ENCODE measurements at regions of chr1 and their contacts with region 1.

Region 1: GRCh38 chr1:87045761-87046304 is 131.4 kb downstream of the HS2ST1 start:
- DNase-seq: peak; percentile 47
- H3K4me3 Mint-ChIP-seq: peak overlapping the region; percentile 47
- H3K27ac Mint-ChIP-seq: peak overlapping the region; percentile 91
- H3K4me1 Mint-ChIP-seq: peaks cover 22% of the 10 kb centered on the region
- H3K27me3 Mint-ChIP-seq: no peaks in the 10 kb centered on the region

Region 2: DNA sequence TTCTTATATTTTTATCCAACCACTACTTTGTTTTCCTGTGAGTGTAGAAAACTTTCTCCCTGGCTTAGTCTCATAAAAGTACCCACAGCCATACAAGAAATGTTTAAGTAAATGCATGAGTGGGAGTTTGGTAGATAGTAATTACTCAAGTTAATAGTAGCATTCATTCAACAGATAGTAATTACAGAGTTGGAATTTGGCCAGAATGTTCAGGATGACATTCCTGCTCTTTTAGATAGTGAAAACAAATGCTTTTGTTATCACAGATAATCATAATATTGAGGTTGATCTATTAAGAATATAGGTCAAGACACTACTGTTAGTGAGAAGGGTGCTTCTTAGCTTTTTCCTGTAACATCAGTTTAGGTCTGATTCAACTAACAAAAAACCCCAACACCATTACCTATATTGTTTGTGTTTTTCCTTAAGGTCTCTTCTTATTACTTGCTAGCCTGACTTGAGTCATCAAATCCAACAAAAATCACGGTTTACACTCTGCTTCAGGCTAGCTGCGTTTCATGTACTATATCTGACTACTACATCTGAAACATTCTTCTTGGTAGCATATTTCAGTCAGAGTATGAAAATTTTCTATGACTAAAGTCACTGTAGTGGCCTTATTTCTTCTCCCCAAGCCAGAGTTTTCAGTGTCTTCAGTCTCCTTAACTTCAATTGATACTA is 32.3 kb after region 1 on chr1:
- intact Hi-C with region 1: loop called (anchors 1 kb)
- DNase-seq: no peak
- H3K4me3 Mint-ChIP-seq: no peak overlapping the region
- H3K27ac Mint-ChIP-seq: no peak overlapping the region
- H3K4me1 Mint-ChIP-seq: peaks cover 14% of the 10 kb centered on the region
- H3K27me3 Mint-ChIP-seq: no peaks in the 10 kb centered on the region